ENCODE measurements at regions of chr16 and their contacts with region 1.

Region 1: DNA sequence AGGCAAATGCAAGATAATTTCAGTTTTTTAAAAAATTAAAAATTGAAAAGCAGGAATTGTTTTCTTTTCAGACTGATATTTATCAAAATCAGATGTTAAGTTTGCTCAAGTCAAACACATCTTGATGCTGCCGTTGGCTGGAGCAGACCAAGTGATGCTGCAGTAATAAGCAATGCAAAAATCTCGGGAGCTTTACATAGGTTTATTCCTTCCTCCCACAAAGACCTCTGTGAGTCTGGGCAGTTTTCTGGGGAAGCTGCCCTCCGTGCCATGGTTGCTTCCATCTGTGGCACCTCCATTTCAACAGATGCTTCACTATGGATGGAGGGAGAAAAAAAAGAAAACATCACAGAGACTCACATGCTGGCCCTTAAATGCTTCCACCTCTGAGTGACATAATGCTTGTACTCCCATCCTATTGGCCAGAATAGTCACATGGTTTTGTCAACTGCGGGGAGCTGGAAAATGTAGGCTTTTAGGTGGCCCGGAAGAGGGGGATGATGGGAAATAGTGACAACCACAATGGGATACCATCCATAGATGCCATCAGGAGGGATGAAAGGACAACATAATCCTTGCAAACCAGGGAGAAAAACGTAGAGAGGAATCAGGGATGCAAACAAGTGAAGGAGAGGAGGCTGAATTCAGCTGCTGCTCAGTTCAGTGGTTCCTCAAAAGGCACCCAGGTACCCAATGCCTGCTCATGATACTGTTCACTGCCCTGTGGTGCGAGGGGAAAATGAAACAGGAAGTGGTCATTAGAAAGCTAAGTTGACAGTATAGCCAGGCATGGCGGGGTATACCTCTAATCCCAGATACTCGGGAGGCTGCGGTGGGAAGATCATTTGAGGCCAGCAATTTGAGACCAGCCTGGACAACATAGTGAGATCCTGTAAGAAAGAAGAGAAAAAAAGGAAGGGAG is 13.5 kb upstream of the ERCC4 start:
- DNase-seq: no peak
- ATAC-seq: no peak
- H3K4me3 ChIP-seq: no peak overlapping the region
- H3K4me3 Mint-ChIP-seq: no peak overlapping the region
- H3K27ac ChIP-seq: no peak overlapping the region
- H3K27ac Mint-ChIP-seq: no peak overlapping the region
- H3K4me1 ChIP-seq: no peaks in the 10 kb centered on the region
- H3K4me1 Mint-ChIP-seq: peaks cover 0 to 5% (median 0%) of the 10 kb centered on the region in 3 donors
- H3K27me3 ChIP-seq: peaks cover 3 to 27% of the 10 kb centered on the region in 2 experiments
- H3K27me3 Mint-ChIP-seq: peaks cover 36 to 46% of the 10 kb centered on the region in 2 donors

Region 2: GRCh38 chr16:13892301-13892700 is 14.1 kb before region 1 on chr16:
- CTCF ChIA-PET with region 1: no interaction called
- POLR2A ChIA-PET with region 1: no interaction called
- DNase-seq: no peak
- ATAC-seq: no peak
- H3K4me3 ChIP-seq: no peak overlapping the region
- H3K4me3 Mint-ChIP-seq: no peak overlapping the region
- H3K27ac ChIP-seq: no peak overlapping the region
- H3K27ac Mint-ChIP-seq: no peak overlapping the region
- H3K4me1 ChIP-seq: no peaks in the 10 kb centered on the region
- H3K4me1 Mint-ChIP-seq: no peaks in the 10 kb centered on the region
- H3K27me3 ChIP-seq: peaks cover 0 to 9% of the 10 kb centered on the region in 2 experiments
- H3K27me3 Mint-ChIP-seq: peaks cover 8 to 34% of the 10 kb centered on the region in 2 donors

Region 3: GRCh38 chr16:13997933-13998332 is 91.5 kb after region 1 on chr16:
- CTCF ChIA-PET with region 1: no interaction called
- POLR2A ChIA-PET with region 1: no interaction called
- DNase-seq: peak in 1 of 35 experiments; percentile 6
- ATAC-seq: peak in 3 of 4 experiments; percentile 37 to 60 (median 53)
- H3K4me3 ChIP-seq: no peak overlapping the region
- H3K4me3 Mint-ChIP-seq: peak overlapping the region in 1 of 3 donors; percentile 26
- H3K27ac ChIP-seq: no peak overlapping the region
- H3K27ac Mint-ChIP-seq: peak overlapping the region; percentile 0 to 74
- H3K4me1 ChIP-seq: peaks cover 6 to 8% of the 10 kb centered on the region in 2 experiments
- H3K4me1 Mint-ChIP-seq: peaks cover 12 to 24% (median 14%) of the 10 kb centered on the region in 3 donors
- H3K27me3 ChIP-seq: peaks cover 0 to 18% of the 10 kb centered on the region in 2 experiments
- H3K27me3 Mint-ChIP-seq: peaks cover 0 to 20% of the 10 kb centered on the region in 2 donors

Region 4: DNA sequence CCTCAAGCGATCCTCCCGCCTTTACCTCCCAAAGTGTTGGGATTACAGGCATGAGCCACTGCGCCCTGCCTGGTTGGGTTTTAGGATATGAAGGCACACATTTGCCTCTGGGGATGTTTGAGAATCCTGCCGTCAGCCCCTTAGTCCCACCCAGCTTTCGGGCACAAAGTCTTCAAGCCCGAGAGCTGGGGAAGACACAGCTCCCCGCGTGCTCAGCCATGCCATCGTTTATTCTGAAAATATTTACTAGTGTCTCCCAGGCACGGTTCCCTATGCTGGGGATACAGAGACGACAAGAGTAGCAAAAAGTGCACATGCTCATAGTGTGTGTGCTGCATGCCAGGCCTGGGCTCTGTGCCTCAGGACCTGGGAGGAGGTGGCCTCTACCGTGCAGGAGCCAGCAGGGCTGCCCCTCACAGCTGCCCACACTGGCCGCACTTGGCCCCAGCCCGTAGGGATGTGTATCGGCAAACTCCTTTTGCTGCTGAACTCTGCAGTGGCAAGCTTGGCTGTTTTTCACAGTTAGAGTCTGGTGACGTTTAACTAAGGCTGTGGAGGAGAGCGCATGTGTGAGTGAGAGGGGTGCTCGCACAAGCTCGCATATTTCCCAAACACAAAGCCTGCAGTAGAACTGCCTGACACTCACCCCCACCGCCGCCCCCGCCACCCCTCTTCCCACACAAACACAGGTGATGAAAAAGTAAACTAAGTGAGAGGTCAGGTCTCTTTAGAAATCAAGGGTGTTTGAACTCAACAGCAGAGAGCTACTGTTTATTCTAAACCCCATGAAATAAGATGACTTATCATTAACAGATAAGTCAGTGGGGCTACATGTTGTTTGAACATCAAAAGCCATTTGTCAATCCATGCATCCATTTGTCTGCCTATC is 431.1 kb after region 1 on chr16:
- CTCF ChIA-PET with region 1: no interaction called
- POLR2A ChIA-PET with region 1: interaction called in 1 of 2 experiments, 10 read pairs
- DNase-seq: no peak
- ATAC-seq: no peak
- H3K4me3 ChIP-seq: no peak overlapping the region
- H3K4me3 Mint-ChIP-seq: no peak overlapping the region
- H3K27ac ChIP-seq: no peak overlapping the region
- H3K27ac Mint-ChIP-seq: no peak overlapping the region
- H3K4me1 ChIP-seq: no peaks in the 10 kb centered on the region
- H3K4me1 Mint-ChIP-seq: no peaks in the 10 kb centered on the region
- H3K27me3 ChIP-seq: peaks cover 0 to 4% of the 10 kb centered on the region in 2 experiments
- H3K27me3 Mint-ChIP-seq: peaks cover 0 to 2% of the 10 kb centered on the region in 2 donors